ENCODE measurements at regions of chr14 and their contacts with region 1.

Region 1: GRCh38 chr14:22491683-22492621 is 97.1 kb downstream of the DAD1 start:
- DNase-seq: no peak
- H3K4me3 Mint-ChIP-seq: peak overlapping the region; percentile 91
- H3K27ac Mint-ChIP-seq: peak overlapping the region; percentile 99
- H3K4me1 Mint-ChIP-seq: peaks cover 33% of the 10 kb centered on the region
- H3K27me3 Mint-ChIP-seq: no peaks in the 10 kb centered on the region

Region 2: DNA sequence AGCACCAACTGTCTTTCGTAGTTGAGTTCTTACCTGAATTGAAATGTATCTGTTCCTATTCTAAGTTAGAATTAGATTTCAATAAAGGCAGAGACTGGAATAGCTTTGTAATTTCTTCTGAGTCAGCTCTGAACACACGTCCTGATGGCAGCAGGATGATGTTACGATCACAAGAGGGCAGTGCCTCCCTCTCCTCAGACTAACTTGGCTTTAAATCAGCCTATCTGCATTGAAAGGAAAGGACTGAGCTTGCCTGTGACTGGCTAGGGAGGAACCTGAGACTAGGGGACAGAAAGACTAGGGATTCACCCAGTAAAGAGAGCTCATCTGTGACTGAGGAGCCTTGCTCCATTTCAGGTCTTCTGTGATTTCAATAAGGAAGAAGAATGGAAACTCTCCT is 494.7 kb before region 1 on chr14:
- intact Hi-C with region 1: loop called (anchors 5 kb)
- DNase-seq: peak; percentile 42
- H3K4me3 Mint-ChIP-seq: peak overlapping the region; percentile 92
- H3K27ac Mint-ChIP-seq: peak overlapping the region; percentile 88
- H3K4me1 Mint-ChIP-seq: peaks cover 26% of the 10 kb centered on the region
- H3K27me3 Mint-ChIP-seq: no peaks in the 10 kb centered on the region

Region 3: GRCh38 chr14:22200977-22201605 is 290.9 kb before region 1 on chr14:
- intact Hi-C with region 1: loop called (anchors 5 kb)
- DNase-seq: no peak
- H3K4me3 Mint-ChIP-seq: no peak overlapping the region
- H3K27ac Mint-ChIP-seq: peak overlapping the region; percentile 44
- H3K4me1 Mint-ChIP-seq: peaks cover 6% of the 10 kb centered on the region
- H3K27me3 Mint-ChIP-seq: no peaks in the 10 kb centered on the region

Region 4: DNA sequence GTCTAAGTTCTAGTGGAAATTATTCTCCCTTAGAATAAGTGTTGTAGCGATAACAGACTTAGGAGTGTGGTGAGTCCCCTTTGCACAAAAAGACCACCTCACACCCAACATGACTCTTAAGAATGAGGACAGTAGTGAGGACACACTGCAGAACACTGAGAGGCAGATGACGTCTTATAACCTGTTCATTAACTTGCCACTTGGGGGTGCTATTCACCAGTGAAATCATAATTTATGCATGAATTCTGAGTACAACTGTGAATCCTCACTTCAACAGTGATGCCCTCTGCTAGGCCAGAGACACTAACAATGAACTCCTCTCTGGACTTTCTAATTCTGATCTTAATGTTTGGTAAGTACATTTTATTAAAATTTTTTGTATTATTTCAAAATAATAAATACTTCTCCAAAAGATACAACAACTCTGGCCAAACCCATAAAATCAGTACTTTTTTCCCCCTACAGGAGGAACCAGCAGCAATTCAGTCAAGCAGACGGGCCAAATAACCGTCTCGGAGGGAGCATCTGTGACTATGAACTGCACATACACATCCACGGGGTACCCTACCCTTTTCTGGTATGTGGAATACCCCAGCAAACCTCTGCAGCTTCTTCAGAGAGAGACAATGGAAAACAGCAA is 177.7 kb before region 1 on chr14:
- intact Hi-C with region 1: loop called (anchors 5 kb)
- DNase-seq: no peak
- H3K4me3 Mint-ChIP-seq: peak overlapping the region; percentile 69
- H3K27ac Mint-ChIP-seq: peak overlapping the region; percentile 72
- H3K4me1 Mint-ChIP-seq: no peaks in the 10 kb centered on the region
- H3K27me3 Mint-ChIP-seq: no peaks in the 10 kb centered on the region

Region 5: DNA sequence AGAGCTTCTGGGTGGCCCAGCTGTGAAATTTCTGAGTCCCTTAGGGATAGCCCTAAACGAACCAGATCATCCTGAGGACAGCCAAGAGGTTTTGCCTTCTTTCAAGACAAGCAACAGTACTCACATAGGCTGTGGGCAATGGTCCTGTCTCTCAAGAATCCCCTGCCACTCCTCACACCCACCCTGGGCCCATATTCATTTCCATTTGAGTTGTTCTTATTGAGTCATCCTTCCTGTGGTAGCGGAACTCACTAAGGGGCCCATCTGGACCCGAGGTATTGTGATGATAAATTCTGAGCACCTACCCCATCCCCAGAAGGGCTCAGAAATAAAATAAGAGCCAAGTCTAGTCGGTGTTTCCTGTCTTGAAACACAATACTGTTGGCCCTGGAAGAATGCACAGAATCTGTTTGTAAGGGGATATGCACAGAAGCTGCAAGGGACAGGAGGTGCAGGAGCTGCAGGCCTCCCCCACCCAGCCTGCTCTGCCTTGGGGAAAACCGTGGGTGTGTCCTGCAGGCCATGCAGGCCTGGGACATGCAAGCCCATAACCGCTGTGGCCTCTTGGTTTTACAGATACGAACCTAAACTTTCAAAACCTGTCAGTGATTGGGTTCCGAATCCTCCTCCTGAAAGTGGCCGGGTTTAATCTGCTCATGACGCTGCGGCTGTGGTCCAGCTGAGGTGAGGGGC is 58.2 kb after region 1 on chr14:
- intact Hi-C with region 1: loop called (anchors 2 kb)
- DNase-seq: peak; percentile 73
- H3K4me3 Mint-ChIP-seq: peak overlapping the region; percentile 79
- H3K27ac Mint-ChIP-seq: peak overlapping the region; percentile 99
- H3K4me1 Mint-ChIP-seq: peaks cover 96% of the 10 kb centered on the region
- H3K27me3 Mint-ChIP-seq: no peaks in the 10 kb centered on the region

Region 6: GRCh38 chr14:22622255-22622654 is 130.3 kb after region 1 on chr14:
- intact Hi-C with region 1: no loop called
- DNase-seq: no peak
- H3K4me3 Mint-ChIP-seq: no peak overlapping the region
- H3K27ac Mint-ChIP-seq: no peak overlapping the region
- H3K4me1 Mint-ChIP-seq: no peaks in the 10 kb centered on the region
- H3K27me3 Mint-ChIP-seq: peaks cover 2% of the 10 kb centered on the region

Measured in activated T-helper 1 cell treated with anti-CD3 and anti-CD28 coated beads, Interleukin-12 subunit alpha, Interleukin-12 subunit beta, Interleukin-2, Interleukin-4 antibody, amounts not matched to agents 30 ng/mL and 10 ng/mL and 1 ng/mL, durations not matched to agents 14 hours and 24 hours and 36 hours (primary cell).